Naive thymus-derived CD4-positive, alpha-beta T cell (primary cell): ENCODE measurements at regions of chr7 and their contacts with region 1.

Region 1: GRCh38 chr7:104923010-104923421 is 91.0 kb upstream of the KMT2E start:
- DNase-seq: peak; percentile 40 to 69 (median 62)
- ATAC-seq: peak; percentile 94
- H3K4me3 ChIP-seq: no peak overlapping the region
- H3K4me3 Mint-ChIP-seq: no peak overlapping the region
- H3K27ac ChIP-seq: no peak overlapping the region
- H3K27ac Mint-ChIP-seq: peak overlapping the region in 5 of 9 donors; percentile 46 to 68 (median 55)
- H3K4me1 ChIP-seq: no peaks in the 10 kb centered on the region
- H3K4me1 Mint-ChIP-seq: peaks cover 0 to 7% (median 2%) of the 10 kb centered on the region in 7 donors
- H3K27me3 ChIP-seq: no peaks in the 10 kb centered on the region
- H3K27me3 Mint-ChIP-seq: peaks cover 0 to 6% (median 0%) of the 10 kb centered on the region in 5 donors

Region 2: GRCh38 chr7:103447073-103447951 is 1475.7 kb before region 1 on chr7:
- CTCF ChIA-PET with region 1: no interaction called
- POLR2A ChIA-PET with region 1: no interaction called
- intact Hi-C with region 1: loop called in 1 of 2 experiments (anchors 2 kb)
- DNase-seq: peak in 5 of 9 donors; percentile 9 to 32 (median 20)
- ATAC-seq: peak; percentile 38
- H3K4me3 ChIP-seq: no peak overlapping the region
- H3K4me3 Mint-ChIP-seq: peak overlapping the region in 7 of 10 donors; percentile 3 to 74 (median 27)
- H3K27ac ChIP-seq: no peak overlapping the region
- H3K27ac Mint-ChIP-seq: no peak overlapping the region
- H3K4me1 ChIP-seq: peaks cover 5 to 7% of the 10 kb centered on the region in 2 donors
- H3K4me1 Mint-ChIP-seq: peaks cover 7 to 23% (median 16%) of the 10 kb centered on the region in 7 donors
- H3K27me3 ChIP-seq: peaks cover 3 to 20% of the 10 kb centered on the region in 2 donors
- H3K27me3 Mint-ChIP-seq: peaks cover 66 to 87% (median 84%) of the 10 kb centered on the region in 5 donors

Region 3: DNA sequence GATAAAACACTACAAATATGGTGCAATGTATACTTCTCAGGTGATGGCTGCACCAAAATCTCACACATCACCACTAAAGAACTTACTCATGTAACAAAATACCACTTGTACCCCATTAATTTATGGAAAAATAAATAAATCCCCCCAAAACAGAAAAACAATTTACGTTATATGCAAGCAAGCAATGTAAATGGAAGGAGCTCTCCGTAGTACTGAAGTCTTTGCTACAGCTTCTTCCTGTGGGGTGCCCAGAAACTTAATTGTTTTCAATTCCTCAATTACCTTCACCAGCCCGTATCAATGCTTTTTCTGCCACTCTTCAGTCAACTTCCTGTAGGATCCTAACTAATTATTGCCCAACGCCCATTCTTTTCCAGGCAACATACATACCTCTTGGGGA is 1071.7 kb before region 1 on chr7:
- CTCF ChIA-PET with region 1: no interaction called
- POLR2A ChIA-PET with region 1: no interaction called
- intact Hi-C with region 1: no loop called
- DNase-seq: no peak
- ATAC-seq: no peak
- H3K4me3 ChIP-seq: no peak overlapping the region
- H3K4me3 Mint-ChIP-seq: no peak overlapping the region
- H3K27ac ChIP-seq: no peak overlapping the region
- H3K27ac Mint-ChIP-seq: no peak overlapping the region
- H3K4me1 ChIP-seq: no peaks in the 10 kb centered on the region
- H3K4me1 Mint-ChIP-seq: peaks cover 0 to 2% (median 0%) of the 10 kb centered on the region in 7 donors
- H3K27me3 ChIP-seq: no peaks in the 10 kb centered on the region
- H3K27me3 Mint-ChIP-seq: peaks cover 0 to 23% (median 10%) of the 10 kb centered on the region in 5 donors

Region 4: DNA sequence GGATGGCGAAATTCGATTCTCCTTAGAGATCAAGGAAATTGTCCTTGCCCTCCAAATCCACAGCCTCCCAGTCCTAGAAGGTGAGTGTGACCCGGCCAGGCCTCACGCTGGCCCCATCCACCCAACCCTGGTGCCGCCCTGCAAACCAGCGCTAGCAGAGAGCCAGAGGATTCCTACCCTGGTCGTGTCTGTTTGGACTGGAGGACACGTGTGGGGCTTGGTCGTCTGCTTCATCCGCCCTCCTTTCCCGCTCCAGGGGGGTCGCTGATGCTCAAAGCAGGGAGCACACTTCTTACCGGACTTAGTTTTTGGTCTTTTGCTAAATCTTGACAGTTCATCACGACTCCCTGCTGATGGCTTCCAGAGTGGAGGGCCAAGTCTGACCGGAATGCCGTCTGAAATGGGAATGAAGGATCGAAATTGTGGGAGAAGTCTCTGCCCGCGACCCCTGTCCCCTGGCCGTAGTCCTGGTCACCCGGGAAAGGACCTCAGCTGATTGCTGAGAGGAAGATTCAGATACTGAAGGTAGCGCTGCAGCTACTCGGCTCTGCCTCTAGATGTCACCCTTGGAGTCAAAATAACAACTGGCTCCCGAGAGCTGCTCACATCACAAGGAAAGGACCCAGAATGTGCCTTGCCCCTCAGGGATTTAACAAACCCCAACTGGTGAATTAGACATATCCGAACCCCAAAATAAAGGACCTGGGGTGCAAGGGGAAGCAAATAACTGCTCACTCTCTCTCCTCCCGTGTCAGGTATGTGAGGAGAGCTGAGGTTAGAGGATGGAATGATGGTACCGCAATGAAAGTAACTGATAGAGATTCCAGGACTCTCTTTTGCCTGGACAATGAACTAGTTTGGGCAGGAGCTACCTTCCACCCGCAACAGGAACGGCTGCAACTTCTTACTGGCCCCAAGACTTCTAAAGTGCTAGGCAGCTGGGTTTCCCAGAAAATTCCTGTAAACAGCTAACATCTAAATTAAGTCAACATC is 691.7 kb before region 1 on chr7:
- CTCF ChIA-PET with region 1: interaction called, 11 read pairs
- POLR2A ChIA-PET with region 1: no interaction called
- intact Hi-C with region 1: loop called (anchors 1 kb)
- DNase-seq: peak; percentile 10 to 46 (median 28)
- ATAC-seq: peak; percentile 86
- H3K4me3 ChIP-seq: no peak overlapping the region
- H3K4me3 Mint-ChIP-seq: no peak overlapping the region
- H3K27ac ChIP-seq: no peak overlapping the region
- H3K27ac Mint-ChIP-seq: peak overlapping the region in 1 of 9 donors; percentile 51
- H3K4me1 ChIP-seq: no peaks in the 10 kb centered on the region
- H3K4me1 Mint-ChIP-seq: peaks cover 0 to 5% (median 0%) of the 10 kb centered on the region in 7 donors
- H3K27me3 ChIP-seq: no peaks in the 10 kb centered on the region
- H3K27me3 Mint-ChIP-seq: peaks cover 16 to 37% (median 30%) of the 10 kb centered on the region in 5 donors

Region 5: DNA sequence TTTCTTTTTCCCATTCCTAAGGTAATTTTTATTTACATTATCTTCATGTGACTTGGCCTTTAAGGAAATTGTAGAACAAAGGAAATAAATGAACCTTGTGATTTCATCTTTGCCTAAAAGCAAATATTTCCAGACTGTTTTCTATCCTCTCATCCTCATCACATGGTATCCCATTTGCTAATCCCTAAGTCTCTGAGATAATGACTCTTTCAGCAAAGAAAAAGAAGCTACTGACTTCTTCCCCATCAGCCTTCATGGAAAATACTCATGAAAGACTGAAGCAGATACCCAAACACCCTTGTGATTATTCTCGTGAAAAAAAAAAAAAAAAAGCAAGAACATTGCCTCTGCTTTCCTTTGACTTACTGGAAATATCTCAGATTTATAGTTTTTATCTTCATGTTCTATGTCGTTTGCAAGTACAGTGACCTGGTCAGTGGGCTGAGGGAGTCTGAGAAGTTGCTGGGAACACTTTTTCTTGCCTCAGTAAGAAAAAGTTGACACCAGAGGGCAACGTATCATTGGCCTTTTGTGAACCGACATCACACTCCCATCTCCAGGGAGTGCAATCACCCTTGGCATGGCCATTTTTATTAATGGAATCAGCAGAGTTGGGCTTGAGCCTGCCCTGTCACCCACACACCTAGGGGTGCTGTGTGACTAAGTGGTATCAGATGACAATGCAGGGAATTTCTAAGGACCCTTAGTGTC is 155.0 kb before region 1 on chr7:
- CTCF ChIA-PET with region 1: no interaction called
- POLR2A ChIA-PET with region 1: no interaction called
- intact Hi-C with region 1: no loop called
- DNase-seq: no peak
- ATAC-seq: no peak
- H3K4me3 ChIP-seq: no peak overlapping the region
- H3K4me3 Mint-ChIP-seq: no peak overlapping the region
- H3K27ac ChIP-seq: no peak overlapping the region
- H3K27ac Mint-ChIP-seq: no peak overlapping the region
- H3K4me1 ChIP-seq: no peaks in the 10 kb centered on the region
- H3K4me1 Mint-ChIP-seq: no peaks in the 10 kb centered on the region
- H3K27me3 ChIP-seq: no peaks in the 10 kb centered on the region
- H3K27me3 Mint-ChIP-seq: peaks cover 11 to 27% (median 16%) of the 10 kb centered on the region in 5 donors

Region 6: GRCh38 chr7:104883718-104884452 is 39.1 kb before region 1 on chr7:
- CTCF ChIA-PET with region 1: interaction called, 57 read pairs
- POLR2A ChIA-PET with region 1: interaction called, 6 read pairs
- intact Hi-C with region 1: loop called (anchors 1 kb)
- DNase-seq: peak; percentile 43 to 79 (median 58)
- ATAC-seq: peak; percentile 92
- H3K4me3 ChIP-seq: no peak overlapping the region
- H3K4me3 Mint-ChIP-seq: peak overlapping the region in 4 of 10 donors; percentile 3 to 56 (median 34)
- H3K27ac ChIP-seq: no peak overlapping the region
- H3K27ac Mint-ChIP-seq: peak overlapping the region in 2 of 9 donors; percentile 12 to 39
- H3K4me1 ChIP-seq: no peaks in the 10 kb centered on the region
- H3K4me1 Mint-ChIP-seq: peaks cover 0 to 18% (median 5%) of the 10 kb centered on the region in 7 donors
- H3K27me3 ChIP-seq: no peaks in the 10 kb centered on the region
- H3K27me3 Mint-ChIP-seq: peaks cover 0 to 11% (median 0%) of the 10 kb centered on the region in 5 donors

Region 7: DNA sequence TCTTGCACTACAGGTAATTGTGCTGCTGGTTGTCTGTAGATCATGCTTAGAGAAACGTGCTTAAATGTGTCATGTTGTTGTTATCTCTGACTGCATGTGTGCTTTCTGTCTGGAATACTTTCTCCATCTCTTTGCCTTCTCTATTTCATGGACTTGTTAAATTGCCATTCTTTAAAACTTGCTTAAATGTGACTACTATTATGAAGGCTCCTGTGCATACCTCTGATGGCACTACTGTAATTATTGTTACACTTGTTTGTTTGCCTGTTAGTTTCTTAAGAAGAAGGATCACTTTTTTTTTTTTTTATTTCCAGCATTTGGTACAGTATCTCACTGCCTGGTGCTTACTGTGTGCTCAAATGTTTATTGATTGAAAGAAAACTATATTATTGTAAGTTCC is 132.6 kb after region 1 on chr7:
- CTCF ChIA-PET with region 1: no interaction called
- POLR2A ChIA-PET with region 1: no interaction called
- intact Hi-C with region 1: no loop called
- DNase-seq: no peak
- ATAC-seq: no peak
- H3K4me3 ChIP-seq: no peak overlapping the region
- H3K4me3 Mint-ChIP-seq: peak overlapping the region in 6 of 10 donors; percentile 23 to 38 (median 30)
- H3K27ac ChIP-seq: no peak overlapping the region
- H3K27ac Mint-ChIP-seq: peak overlapping the region; percentile 13 to 85 (median 59)
- H3K4me1 ChIP-seq: peaks cover 8 to 15% of the 10 kb centered on the region in 2 donors
- H3K4me1 Mint-ChIP-seq: peaks cover 45 to 87% (median 85%) of the 10 kb centered on the region in 7 donors
- H3K27me3 ChIP-seq: no peaks in the 10 kb centered on the region
- H3K27me3 Mint-ChIP-seq: no peaks in the 10 kb centered on the region

Region 8: GRCh38 chr7:105068886-105069285 is 145.9 kb after region 1 on chr7:
- CTCF ChIA-PET with region 1: no interaction called
- POLR2A ChIA-PET with region 1: interaction called, 5 read pairs
- intact Hi-C with region 1: loop called in 1 of 2 experiments (anchors 5 kb)
- DNase-seq: no peak
- ATAC-seq: no peak
- H3K4me3 ChIP-seq: no peak overlapping the region
- H3K4me3 Mint-ChIP-seq: no peak overlapping the region
- H3K27ac ChIP-seq: no peak overlapping the region
- H3K27ac Mint-ChIP-seq: peak overlapping the region in 2 of 9 donors; percentile 41 to 55
- H3K4me1 ChIP-seq: peaks cover 0 to 4% of the 10 kb centered on the region in 2 donors
- H3K4me1 Mint-ChIP-seq: peaks cover 6 to 33% (median 14%) of the 10 kb centered on the region in 7 donors
- H3K27me3 ChIP-seq: no peaks in the 10 kb centered on the region
- H3K27me3 Mint-ChIP-seq: no peaks in the 10 kb centered on the region

Region 9: DNA sequence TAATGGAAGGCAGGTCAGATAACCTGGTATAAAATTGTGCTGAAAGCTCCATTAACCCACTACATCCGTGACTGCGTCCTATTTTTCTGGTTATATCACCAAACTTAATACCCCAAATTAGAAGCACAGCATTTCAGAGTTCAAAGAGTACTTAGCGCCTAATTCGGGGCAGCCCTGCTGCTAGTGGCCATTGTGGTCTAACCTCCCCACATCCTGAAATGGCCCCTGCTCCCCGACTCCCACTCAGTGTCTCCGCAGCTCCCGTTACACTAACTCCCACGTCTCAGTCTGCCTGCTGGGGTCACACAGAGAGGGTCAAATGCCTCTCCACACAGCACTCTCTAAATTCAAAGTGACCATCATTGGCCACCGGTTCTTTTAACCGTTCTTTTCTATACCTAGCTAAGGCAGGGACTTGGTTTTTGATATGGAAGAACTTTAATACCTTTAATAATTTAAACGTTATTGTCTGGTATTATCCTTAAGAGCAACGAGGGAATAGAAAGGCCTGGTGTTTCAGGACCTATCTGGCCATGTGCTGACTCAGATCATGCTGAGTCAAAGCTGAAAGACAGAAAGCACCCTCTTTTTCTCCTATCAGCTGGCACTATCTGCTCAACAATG is 208.1 kb after region 1 on chr7:
- CTCF ChIA-PET with region 1: no interaction called
- POLR2A ChIA-PET with region 1: no interaction called
- intact Hi-C with region 1: no loop called
- DNase-seq: no peak
- ATAC-seq: no peak
- H3K4me3 ChIP-seq: no peak overlapping the region
- H3K4me3 Mint-ChIP-seq: no peak overlapping the region
- H3K27ac ChIP-seq: no peak overlapping the region
- H3K27ac Mint-ChIP-seq: peak overlapping the region in 3 of 9 donors; percentile 19 to 51 (median 23)
- H3K4me1 ChIP-seq: no peaks in the 10 kb centered on the region
- H3K4me1 Mint-ChIP-seq: peaks cover 4 to 22% (median 11%) of the 10 kb centered on the region in 7 donors
- H3K27me3 ChIP-seq: no peaks in the 10 kb centered on the region
- H3K27me3 Mint-ChIP-seq: no peaks in the 10 kb centered on the region

Region 10: DNA sequence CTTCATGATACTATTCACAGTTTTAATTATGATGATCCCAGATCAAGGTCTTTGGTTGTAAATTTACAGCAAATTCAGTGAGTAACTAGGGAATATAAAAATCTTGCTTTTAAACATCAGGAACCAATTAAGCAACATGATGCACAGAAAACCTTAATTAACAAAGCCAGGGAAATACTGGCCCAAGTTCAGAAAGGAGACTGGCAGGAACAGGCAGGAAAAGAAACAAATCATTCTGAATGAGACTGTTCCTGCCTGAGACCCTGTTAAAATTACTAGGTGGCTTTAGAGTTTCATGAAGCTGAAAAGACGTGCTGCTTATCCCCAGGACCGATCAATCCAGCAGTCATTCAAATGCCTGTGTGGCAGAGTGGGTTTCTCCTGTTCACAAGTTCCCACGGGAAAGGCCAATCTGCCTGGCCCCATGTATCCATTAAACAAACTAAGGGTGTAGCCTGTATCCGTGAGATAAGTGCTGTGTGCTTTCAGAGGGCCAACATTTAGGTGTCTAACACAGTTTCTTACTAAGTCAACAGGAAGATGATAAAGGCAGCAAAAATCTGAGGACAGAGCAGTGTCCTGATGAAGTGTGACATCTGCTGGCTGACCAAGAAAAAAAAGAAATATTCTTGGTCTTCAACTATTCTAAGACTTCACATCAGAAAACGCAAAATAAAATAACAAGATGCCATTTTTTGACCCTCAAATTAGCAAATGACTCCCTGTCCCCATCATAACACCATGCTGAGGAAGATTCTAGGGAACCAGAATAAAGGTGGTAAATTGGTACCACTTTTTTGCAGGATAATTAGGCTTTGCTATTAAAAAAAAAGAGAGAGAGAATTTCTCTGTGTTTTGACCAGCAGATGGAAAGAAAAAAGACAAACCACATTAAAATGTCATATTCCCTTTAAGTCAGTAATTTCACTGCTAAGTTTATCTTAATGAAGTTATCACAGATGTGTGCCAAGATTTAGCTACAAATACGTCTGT is 564.9 kb after region 1 on chr7:
- CTCF ChIA-PET with region 1: no interaction called
- POLR2A ChIA-PET with region 1: no interaction called
- intact Hi-C with region 1: loop called (anchors 1 to 2 kb)
- DNase-seq: peak in 4 of 9 donors; percentile 4 to 31 (median 19)
- ATAC-seq: no peak
- H3K4me3 ChIP-seq: no peak overlapping the region
- H3K4me3 Mint-ChIP-seq: no peak overlapping the region
- H3K27ac ChIP-seq: no peak overlapping the region
- H3K27ac Mint-ChIP-seq: peak overlapping the region in 1 of 9 donors; percentile 20
- H3K4me1 ChIP-seq: no peaks in the 10 kb centered on the region
- H3K4me1 Mint-ChIP-seq: peaks cover 0 to 8% (median 0%) of the 10 kb centered on the region in 7 donors
- H3K27me3 ChIP-seq: no peaks in the 10 kb centered on the region
- H3K27me3 Mint-ChIP-seq: no peaks in the 10 kb centered on the region